PC-3 (cell line): ENCODE measurements at regions of chr17 and their contacts with region 1.

Region 1: DNA sequence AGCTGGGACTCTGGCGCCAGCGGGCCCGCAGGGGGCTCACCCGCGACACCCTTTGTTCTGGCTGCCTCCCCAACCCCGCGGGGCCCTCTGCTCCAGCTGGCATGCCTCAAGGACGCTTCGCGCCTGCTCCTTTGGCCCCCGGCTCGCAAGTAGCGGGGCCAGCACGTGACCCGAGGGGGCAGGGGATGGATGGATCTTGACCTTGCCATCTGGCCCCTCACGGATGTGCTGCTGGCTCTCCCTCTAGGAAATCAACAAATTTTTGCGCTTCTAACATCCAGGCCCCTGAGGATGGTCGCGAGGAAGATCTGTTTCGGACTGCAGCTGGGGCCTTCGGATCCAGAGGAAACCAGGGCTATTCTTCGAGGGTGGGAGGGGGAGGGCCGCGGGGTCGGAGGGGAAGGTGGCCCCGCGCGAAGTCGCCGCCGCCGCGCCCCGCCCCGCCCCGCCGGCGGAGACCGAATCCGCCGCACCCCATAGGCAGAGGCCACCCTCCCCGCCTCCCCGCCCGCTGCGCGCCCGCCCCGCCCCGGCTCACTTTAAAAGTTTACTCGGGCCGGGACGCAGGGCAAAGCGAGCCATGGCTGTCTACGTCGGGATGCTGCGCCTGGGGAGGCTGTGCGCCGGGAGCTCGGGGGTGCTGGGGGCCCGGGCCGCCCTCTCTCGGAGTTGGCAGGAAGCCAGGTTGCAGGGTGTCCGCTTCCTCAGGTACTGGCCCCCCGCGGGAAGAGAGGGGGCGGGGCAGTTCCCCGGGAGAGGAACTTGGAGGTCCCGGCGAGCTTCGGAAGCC is at the start of gene ACSF2:
- DNase-seq: peak; percentile 76
- ATAC-seq: peak; percentile 74
- H3K4me3 ChIP-seq: peak within 1 kb of the TSS; percentile 83
- H3K27ac ChIP-seq: peak within 1 kb of the TSS; percentile 67
- H3K4me1 ChIP-seq: peaks cover 58% of the 10 kb centered on the region
- H3K27me3 ChIP-seq: no peaks in the 10 kb centered on the region
- CTCF ChIP-seq: no peak
- total RNA-seq, gene ACSF2: 69.3 and 72.7 TPM in 2 replicates

Region 2: GRCh38 chr17:50352072-50352692 is 73.7 kb before region 1 on chr17:
- CTCF ChIA-PET with region 1: no interaction called
- POLR2A ChIA-PET with region 1: no interaction called
- intact Hi-C with region 1: no loop called
- DNase-seq: no peak
- ATAC-seq: no peak
- H3K4me3 ChIP-seq: no peak overlapping the region
- H3K27ac ChIP-seq: no peak overlapping the region
- H3K4me1 ChIP-seq: peaks cover 17% of the 10 kb centered on the region
- H3K27me3 ChIP-seq: no peaks in the 10 kb centered on the region
- CTCF ChIP-seq: no peak

Region 3: GRCh38 chr17:50443368-50443971 is 17.6 kb after region 1 on chr17:
- CTCF ChIA-PET with region 1: interaction called, 4 read pairs
- POLR2A ChIA-PET with region 1: no interaction called
- intact Hi-C with region 1: loop called (anchors 2 kb)
- DNase-seq: peak; percentile 86
- ATAC-seq: peak; percentile 52
- H3K4me3 ChIP-seq: peak overlapping the region; percentile 2; the same call in 1 of the 2 replicates
- H3K27ac ChIP-seq: no peak overlapping the region
- H3K4me1 ChIP-seq: peaks cover 29% of the 10 kb centered on the region
- H3K27me3 ChIP-seq: no peaks in the 10 kb centered on the region
- CTCF ChIP-seq: no peak

Region 4: DNA sequence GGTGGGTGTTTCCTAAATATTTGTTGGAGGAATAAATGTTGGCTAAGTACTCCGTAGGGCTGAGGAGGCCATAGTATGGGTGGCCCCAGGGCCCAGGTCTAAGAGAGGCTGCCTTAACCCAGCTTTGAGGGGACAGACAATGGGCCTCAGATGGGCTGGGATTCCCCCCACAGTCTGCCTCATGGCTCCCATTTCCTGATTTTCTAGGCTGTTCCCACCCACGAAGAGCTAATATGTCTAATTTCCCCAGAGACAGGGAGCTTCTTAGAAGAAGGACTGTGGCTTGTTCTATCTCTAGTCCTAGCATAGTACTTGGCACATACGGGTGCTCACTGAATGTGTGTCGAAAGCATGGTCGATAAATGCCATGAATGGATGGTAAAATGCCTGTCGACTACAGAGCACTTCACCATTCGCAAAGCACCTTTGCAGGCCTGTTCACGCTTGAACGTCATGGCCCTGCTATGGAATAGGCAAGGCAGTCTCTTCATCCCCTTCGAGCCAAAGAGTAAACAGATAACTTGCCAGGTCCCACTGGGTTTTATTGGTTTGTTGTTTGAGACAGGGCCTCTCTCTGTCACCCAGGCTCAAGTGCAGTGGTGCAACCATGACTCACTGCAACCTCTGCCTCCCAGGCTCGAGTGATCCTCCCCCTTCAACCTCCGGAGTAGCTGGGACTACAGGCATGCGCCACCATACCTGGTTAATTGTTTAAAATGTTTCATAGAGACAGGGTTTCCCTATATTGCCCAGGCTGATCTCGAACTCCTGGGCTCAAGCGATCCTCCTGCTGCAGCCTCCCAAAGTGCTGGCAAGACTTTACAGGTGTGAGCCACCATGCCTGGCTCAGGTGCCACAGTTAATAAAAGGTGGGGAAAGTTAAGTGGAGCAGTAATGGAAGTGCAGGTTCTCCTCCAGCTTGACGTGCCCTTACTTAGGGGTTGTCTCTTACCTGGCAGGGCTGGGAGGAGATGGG is 33.1 kb after region 1 on chr17:
- CTCF ChIA-PET with region 1: no interaction called
- POLR2A ChIA-PET with region 1: no interaction called
- intact Hi-C with region 1: loop called (anchors 5 kb)
- DNase-seq: peak; percentile 98
- ATAC-seq: peak; percentile 96
- H3K4me3 ChIP-seq: no peak overlapping the region
- H3K27ac ChIP-seq: peak overlapping the region; percentile 65
- H3K4me1 ChIP-seq: peaks cover 33% of the 10 kb centered on the region
- H3K27me3 ChIP-seq: no peaks in the 10 kb centered on the region
- CTCF ChIP-seq: no peak